ENCODE measurements at regions of chr17 and their contacts with region 1.

Region 1: GRCh38 chr17:29777663-29778062 is 152.4 kb downstream of the SSH2 start:
- DNase-seq: no peak
- ATAC-seq: no peak
- H3K4me3 Mint-ChIP-seq: no peak overlapping the region
- H3K27ac Mint-ChIP-seq: no peak overlapping the region
- H3K4me1 Mint-ChIP-seq: peaks cover 14% of the 10 kb centered on the region
- H3K27me3 Mint-ChIP-seq: no peaks in the 10 kb centered on the region
- CTCF ChIP-seq: no peak

Region 2: GRCh38 chr17:29617125-29617480 is 160.6 kb before region 1 on chr17:
- CTCF ChIA-PET with region 1: interaction called, 25 read pairs
- POLR2A ChIA-PET with region 1: no interaction called
- intact Hi-C with region 1: loop called (anchors 1 kb)
- DNase-seq: peak; percentile 75
- ATAC-seq: peak; percentile 79
- H3K4me3 Mint-ChIP-seq: peak overlapping the region; percentile 83
- H3K27ac Mint-ChIP-seq: peak overlapping the region; percentile 72
- H3K4me1 Mint-ChIP-seq: peaks cover 46% of the 10 kb centered on the region
- H3K27me3 Mint-ChIP-seq: peaks cover 3% of the 10 kb centered on the region
- CTCF ChIP-seq: no peak

Region 3: GRCh38 chr17:29682054-29682453 is 95.6 kb before region 1 on chr17:
- CTCF ChIA-PET with region 1: interaction called, 45 read pairs
- POLR2A ChIA-PET with region 1: interaction called, 15 read pairs
- intact Hi-C with region 1: loop called (anchors 1 kb)
- DNase-seq: no peak
- ATAC-seq: peak; percentile 93
- H3K4me3 Mint-ChIP-seq: peak overlapping the region; percentile 21
- H3K27ac Mint-ChIP-seq: peak overlapping the region; percentile 81
- H3K4me1 Mint-ChIP-seq: peaks cover 27% of the 10 kb centered on the region
- H3K27me3 Mint-ChIP-seq: no peaks in the 10 kb centered on the region
- CTCF ChIP-seq: no peak

Region 4: DNA sequence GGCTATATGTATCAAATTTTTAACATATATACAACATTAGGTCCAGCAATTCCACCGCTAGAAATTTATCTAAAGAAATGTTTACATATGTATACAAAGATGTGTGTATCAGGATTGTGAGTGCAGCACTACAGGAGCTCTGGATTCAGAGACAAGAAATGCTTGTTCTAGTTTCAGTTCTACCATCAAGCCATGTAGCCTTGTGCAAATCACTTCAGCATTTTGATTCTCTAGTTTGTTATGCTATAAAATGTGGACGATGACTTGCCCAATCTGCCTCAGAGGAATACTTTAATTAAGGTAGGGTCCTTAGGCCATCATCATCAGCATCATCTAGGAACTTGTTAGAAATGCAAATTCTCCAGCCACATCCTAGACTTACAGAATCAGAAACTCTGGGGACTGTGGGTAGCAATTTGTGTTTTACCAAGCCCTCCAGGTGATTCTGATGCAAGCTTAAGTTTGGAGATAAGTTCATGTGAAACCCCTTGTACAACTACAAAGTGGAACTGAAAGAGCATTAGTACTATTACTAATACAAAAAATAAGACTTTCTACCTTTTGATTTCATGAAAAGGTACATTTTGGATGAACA is 23.7 kb before region 1 on chr17:
- CTCF ChIA-PET with region 1: interaction called, 4 read pairs
- POLR2A ChIA-PET with region 1: no interaction called
- intact Hi-C with region 1: loop called (anchors 1 kb)
- DNase-seq: no peak
- ATAC-seq: peak; percentile 80
- H3K4me3 Mint-ChIP-seq: peak overlapping the region; percentile 5
- H3K27ac Mint-ChIP-seq: peak overlapping the region; percentile 77
- H3K4me1 Mint-ChIP-seq: peaks cover 58% of the 10 kb centered on the region
- H3K27me3 Mint-ChIP-seq: no peaks in the 10 kb centered on the region
- CTCF ChIP-seq: no peak

Region 5: DNA sequence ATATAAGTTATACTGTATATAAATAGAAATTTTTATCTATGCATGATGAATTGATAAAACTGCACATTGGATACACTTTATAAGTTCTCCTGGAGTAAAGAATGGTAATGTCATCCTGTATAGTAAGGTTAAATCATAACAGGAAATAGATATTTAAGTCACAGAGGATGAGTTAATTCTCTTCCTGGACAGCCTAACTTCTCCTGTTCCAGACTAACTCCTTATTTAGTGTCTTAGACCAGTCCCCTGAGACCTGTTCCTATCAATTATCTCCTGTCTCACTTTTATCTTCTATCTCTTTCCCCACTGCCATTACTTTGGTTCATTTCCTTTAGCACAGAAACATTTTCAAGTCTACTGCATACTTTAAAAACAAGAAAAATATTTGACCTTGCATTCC is 105.8 kb after region 1 on chr17:
- CTCF ChIA-PET with region 1: no interaction called
- POLR2A ChIA-PET with region 1: no interaction called
- intact Hi-C with region 1: no loop called
- DNase-seq: no peak
- ATAC-seq: no peak
- H3K4me3 Mint-ChIP-seq: no peak overlapping the region
- H3K27ac Mint-ChIP-seq: no peak overlapping the region
- H3K4me1 Mint-ChIP-seq: peaks cover 46% of the 10 kb centered on the region
- H3K27me3 Mint-ChIP-seq: no peaks in the 10 kb centered on the region
- CTCF ChIP-seq: no peak

Measured in activated B cell treated with CpG ODN at 0.5 μM for 24 hours (primary cell).